HEK293T (cell line): ENCODE measurements at regions of chr19 and their contacts with region 1.

Region 1: GRCh38 chr19:20051841-20052768 is 12.8 kb upstream of the ZNF682 start:
- DNase-seq: no peak

Region 2: DNA sequence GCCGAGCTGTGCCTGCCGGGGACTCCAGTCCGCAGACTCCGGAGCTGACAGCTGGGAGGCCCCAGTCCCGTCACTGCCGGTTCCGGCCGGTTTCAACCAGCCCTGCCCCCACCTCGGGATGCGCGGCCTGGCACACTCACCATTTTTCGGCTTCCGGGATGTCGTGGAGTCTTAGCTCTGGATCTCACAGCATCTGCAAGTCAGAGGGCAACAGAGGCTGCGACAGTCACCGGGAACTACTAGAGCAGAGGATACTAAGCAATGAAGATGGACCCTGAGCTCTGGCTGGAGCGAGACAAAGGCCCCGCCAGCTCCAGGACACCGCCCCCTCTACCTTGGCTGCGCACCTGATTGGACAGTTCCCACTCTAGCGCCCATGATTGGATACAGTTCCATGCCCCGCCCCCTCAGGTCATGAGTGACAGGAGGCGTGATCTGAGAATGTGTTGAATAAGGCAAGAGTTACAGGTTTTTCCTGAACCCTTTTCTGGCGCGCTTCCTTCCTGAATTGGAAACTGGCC is 12.8 kb before region 1 on chr19 and contains the start of gene ZNF682:
- CTCF ChIA-PET with region 1: no interaction called
- POLR2A ChIA-PET with region 1: interaction called, 14 read pairs
- DNase-seq: peak; percentile 7

Region 3: GRCh38 chr19:20182222-20182785 is 130.2 kb after region 1 on chr19:
- CTCF ChIA-PET with region 1: no interaction called
- POLR2A ChIA-PET with region 1: no interaction called
- DNase-seq: no peak